HepG2 (cell line): ENCODE measurements at regions of chr7 and their contacts with region 1.

Region 1: DNA sequence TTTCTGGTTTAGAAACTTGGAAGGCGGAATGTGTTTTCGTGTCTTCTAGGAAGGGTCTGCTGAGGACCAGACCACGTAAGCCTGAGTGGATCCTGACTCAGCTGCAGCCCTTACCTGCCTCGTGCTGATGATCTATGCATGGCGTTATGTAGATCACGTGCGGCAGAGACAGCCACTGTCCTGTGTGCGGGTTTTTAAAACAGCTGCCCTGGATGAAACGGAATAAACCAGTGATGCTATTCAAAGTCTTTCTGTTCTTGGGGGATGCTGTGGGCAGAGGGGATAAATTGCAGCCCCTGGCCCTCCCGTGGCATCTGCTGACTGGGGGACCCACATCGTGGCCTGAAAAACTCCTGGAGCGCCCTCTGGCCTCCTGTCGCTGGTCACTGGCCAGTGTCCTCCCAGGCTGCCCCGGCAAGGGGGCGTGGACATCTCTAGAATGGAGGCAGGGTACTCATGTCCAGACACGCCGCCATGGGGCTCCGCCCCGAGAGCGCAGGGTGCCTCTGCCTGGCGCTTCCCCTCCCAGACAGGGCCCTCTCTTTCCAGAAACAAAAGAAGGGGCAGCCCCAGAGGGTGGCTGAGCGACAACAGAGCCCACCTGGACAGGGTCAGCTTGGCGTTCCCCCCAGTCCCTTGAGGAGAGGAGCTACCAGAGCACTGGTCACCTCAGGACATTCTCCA is 13.2 kb downstream of the ALKBH4 start:
- DNase-seq: peak; percentile 67
- ATAC-seq: peak; percentile 93
- H3K4me3 ChIP-seq: peak overlapping the region in 2 of 3 experiments; percentile 44 to 66; a peak in 5 of 6 replicates
- H3K27ac ChIP-seq: no peak overlapping the region
- H3K4me1 ChIP-seq: peaks cover 16% of the 10 kb centered on the region
- H3K27me3 ChIP-seq: no peaks in the 10 kb centered on the region
- CTCF ChIP-seq: peak; percentile 87
- EP300 ChIP-seq: no peak
- POLR2A ChIP-seq: peak in 1 of 2 experiments; percentile 57; a peak in 3 of 4 replicates
- RAD21 ChIP-seq: peak; percentile 24; the same call in 1 of the 2 replicates

Region 2: GRCh38 chr7:102404005-102404861 is 47.3 kb before region 1 on chr7:
- CTCF ChIA-PET with region 1: interaction called, 4 read pairs
- POLR2A ChIA-PET with region 1: no interaction called
- in situ Hi-C with region 1: no loop called
- intact Hi-C with region 1: loop called (anchors 1 kb)
- DNase-seq: peak; percentile 64
- ATAC-seq: peak; percentile 95
- H3K4me3 ChIP-seq: no peak overlapping the region
- H3K27ac ChIP-seq: peak overlapping the region; percentile 60
- H3K4me1 ChIP-seq: peaks cover 14% of the 10 kb centered on the region; the same call in 1 of the 2 replicates
- H3K27me3 ChIP-seq: no peaks in the 10 kb centered on the region
- CTCF ChIP-seq: peak; percentile 80
- EP300 ChIP-seq: no peak
- POLR2A ChIP-seq: no peak
- RAD21 ChIP-seq: peak; percentile 48